ENCODE measurements at regions of chr20 and their contacts with region 1.

Region 1: GRCh38 chr20:34302723-34303528 is at the start of gene AHCY:
- DNase-seq: peak; percentile 88 to 97 (median 96)
- H3K4me3 ChIP-seq: peak within 1 kb of the TSS; percentile 67 to 99 (median 91)
- H3K27ac ChIP-seq: peak within 1 kb of the TSS; percentile 59 to 96 (median 90)
- H3K27me3 ChIP-seq: no peaks in the 10 kb centered on the region
- CTCF ChIP-seq: peak in 35 of 56 donors; percentile 5 to 56 (median 30)
- total RNA-seq, gene AHCY: 29.7 to 56.2 (median 46.7) TPM

Region 2: GRCh38 chr20:33810885-33811777 is 491.8 kb before region 1 on chr20 and contains the start of gene CHMP4B:
- intact Hi-C with region 1: loop called in 1 of 2 experiments (anchors 10 kb)
- DNase-seq: peak; percentile 98 to 99 (median 99)
- H3K4me3 ChIP-seq: peak within 1 kb of the TSS; percentile 66 to 100 (median 95)
- H3K27ac ChIP-seq: peak within 1 kb of the TSS in 57 of 59 donors; percentile 16 to 92 (median 83)
- H3K27me3 ChIP-seq: no peaks in the 10 kb centered on the region
- CTCF ChIP-seq: peak in 32 of 56 donors; percentile 7 to 57 (median 29)
- total RNA-seq, gene CHMP4B: 68.7 to 154 (median 115) TPM

Region 3: DNA sequence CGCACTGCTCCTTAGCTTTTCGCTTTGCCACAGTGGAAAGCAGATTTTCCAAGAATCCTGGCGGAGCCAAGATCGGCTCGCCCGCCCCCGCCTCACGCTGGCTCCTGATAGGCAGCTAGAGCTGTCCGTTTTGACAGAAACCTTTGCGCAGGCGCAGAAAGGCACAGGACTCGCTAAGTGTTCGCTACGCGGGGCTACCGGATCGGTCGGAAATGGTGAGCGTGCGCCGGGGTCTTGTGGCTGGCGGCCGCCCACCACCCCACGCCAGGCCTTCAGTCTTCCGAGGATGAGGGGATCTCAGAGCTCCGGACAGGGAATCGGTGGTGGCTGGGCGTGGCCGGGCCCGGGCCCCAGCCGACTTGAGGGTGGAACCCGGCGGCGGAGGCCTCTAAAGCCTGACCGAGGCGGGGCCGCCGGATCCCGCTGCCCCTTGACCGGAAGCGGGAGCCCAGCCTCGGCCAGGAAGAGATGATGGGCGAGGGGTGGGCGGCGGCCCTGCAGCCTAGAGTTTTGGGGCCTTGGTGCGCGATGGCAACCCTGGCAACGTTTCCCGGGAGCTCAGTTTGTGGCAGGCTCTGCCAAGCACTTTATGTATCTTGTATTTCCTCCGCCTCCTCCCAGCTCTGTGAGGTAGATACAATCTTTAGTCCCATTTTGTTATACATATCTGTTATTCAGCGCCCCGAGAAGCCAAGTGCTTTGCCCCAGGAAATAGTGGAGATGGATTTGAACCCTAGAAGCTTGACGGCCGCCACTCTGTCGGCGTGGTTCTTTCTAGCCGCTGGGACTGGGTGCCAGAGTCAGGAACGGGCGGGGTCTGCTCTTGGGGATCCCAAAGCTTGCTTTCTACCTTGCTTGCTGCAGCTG is 213.6 kb after region 1 on chr20 and contains the start of gene DYNLRB1:
- intact Hi-C with region 1: loop called in 1 of 2 experiments (anchors 2 kb)
- DNase-seq: peak; percentile 95 to 98 (median 97)
- H3K4me3 ChIP-seq: peak within 1 kb of the TSS; percentile 69 to 99 (median 89)
- H3K27ac ChIP-seq: peak within 1 kb of the TSS; percentile 68 to 99 (median 98)
- H3K27me3 ChIP-seq: no peaks in the 10 kb centered on the region
- CTCF ChIP-seq: peak in 20 of 56 donors; percentile 10 to 50 (median 22)
- total RNA-seq, gene DYNLRB1: 153 to 387 (median 261) TPM

Region 4: GRCh38 chr20:34768096-34768495 is 465.2 kb after region 1 on chr20:
- intact Hi-C with region 1: loop called in 1 of 2 experiments (anchors 2 kb)
- DNase-seq: no peak
- H3K4me3 ChIP-seq: no peak overlapping the region
- H3K27ac ChIP-seq: peak overlapping the region in 5 of 59 donors; percentile 8 to 74 (median 48)
- H3K27me3 ChIP-seq: no peaks in the 10 kb centered on the region
- CTCF ChIP-seq: no peak

Measured in dorsolateral prefrontal cortex (tissue), 120 donors.